Caco-2 (cell line): ENCODE measurements at regions of chr10 and their contacts with region 1.

Region 1: DNA sequence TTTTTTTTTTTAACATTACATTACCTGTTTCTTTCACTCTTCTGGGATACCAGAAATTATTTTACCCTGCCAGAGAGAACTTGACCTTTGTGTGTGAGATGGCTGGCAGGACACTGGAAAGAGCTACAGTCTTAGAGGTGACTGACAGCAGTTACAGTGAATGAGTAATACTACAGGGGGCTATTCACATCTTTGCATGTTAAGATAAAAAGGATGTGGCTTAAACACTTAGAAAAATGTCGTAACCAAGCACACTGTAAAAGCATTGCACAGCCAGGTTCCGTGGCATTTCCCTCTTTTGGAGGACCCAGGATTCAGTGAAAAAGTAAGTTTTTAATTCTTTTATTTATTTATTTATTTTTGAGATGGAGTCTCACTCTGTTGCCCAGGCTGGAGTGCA is 18.8 kb upstream of the TBC1D12 start:
- DNase-seq: no peak
- H3K4me3 ChIP-seq: no peak overlapping the region
- H3K4me3 Mint-ChIP-seq: peak overlapping the region; percentile 29
- H3K27ac Mint-ChIP-seq: peak overlapping the region; percentile 88
- H3K4me1 ChIP-seq: peaks cover 61% of the 10 kb centered on the region
- H3K4me1 Mint-ChIP-seq: peaks cover 62% of the 10 kb centered on the region
- H3K27me3 ChIP-seq: no peaks in the 10 kb centered on the region
- H3K27me3 Mint-ChIP-seq: no peaks in the 10 kb centered on the region
- CTCF ChIP-seq: no peak

Region 2: GRCh38 chr10:94308866-94309265 is 74.7 kb before region 1 on chr10:
- CTCF ChIA-PET with region 1: no interaction called
- POLR2A ChIA-PET with region 1: no interaction called
- intact Hi-C with region 1: no loop called
- DNase-seq: no peak
- H3K4me3 ChIP-seq: no peak overlapping the region
- H3K4me3 Mint-ChIP-seq: no peak overlapping the region
- H3K27ac Mint-ChIP-seq: no peak overlapping the region
- H3K4me1 ChIP-seq: peaks cover 16% of the 10 kb centered on the region; the same call in 1 of the 2 replicates
- H3K4me1 Mint-ChIP-seq: peaks cover 7% of the 10 kb centered on the region
- H3K27me3 ChIP-seq: no peaks in the 10 kb centered on the region
- H3K27me3 Mint-ChIP-seq: no peaks in the 10 kb centered on the region
- CTCF ChIP-seq: no peak

Region 3: DNA sequence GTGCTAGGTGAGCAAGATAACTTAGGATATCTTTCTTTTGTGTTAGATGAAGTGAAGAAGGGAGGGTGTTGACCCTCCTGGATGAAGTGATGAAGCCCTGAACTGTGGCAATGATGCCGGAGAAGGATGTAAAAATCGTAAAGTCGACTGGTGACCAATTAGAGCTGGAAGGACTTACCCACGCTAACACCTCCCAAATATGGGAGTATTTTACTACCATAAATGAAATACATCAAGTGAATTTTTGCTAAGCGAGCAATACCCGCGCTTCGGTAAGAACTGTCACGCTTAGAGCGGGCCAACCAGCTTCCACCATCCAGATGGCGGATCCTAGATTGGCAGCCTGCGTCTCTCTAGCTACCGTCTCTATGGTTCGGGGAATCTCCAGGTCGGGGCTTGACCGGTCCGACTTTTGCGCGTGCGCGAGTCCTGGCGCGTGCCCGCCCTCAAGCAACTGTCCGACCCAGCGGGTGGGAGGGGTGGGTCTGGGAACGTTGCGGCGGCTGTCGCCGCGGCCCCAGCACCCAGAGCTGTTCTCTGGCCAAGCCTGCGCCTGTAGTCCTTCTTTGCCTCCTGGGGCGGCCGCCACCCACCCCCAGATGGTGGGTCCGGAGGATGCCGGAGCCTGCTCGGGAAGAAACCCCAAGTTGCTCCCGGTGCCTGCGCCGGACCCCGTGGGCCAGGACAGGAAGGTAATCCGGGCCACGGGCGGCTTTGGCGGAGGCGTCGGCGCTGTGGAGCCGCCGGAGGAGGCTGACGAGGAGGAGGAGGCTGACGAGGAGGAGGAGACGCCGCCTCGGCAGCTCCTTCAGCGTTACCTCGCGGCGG is 18.7 kb after region 1 on chr10 and contains the start of gene TBC1D12:
- CTCF ChIA-PET with region 1: interaction called, 17 read pairs
- POLR2A ChIA-PET with region 1: interaction called, 10 read pairs
- intact Hi-C with region 1: loop called (anchors 1 kb)
- DNase-seq: peak; percentile 98
- H3K4me3 ChIP-seq: peak within 1 kb of the TSS; percentile 97
- H3K4me3 Mint-ChIP-seq: peak within 1 kb of the TSS; percentile 78
- H3K27ac Mint-ChIP-seq: peak within 1 kb of the TSS; percentile 92
- H3K4me1 ChIP-seq: peaks cover 45% of the 10 kb centered on the region
- H3K4me1 Mint-ChIP-seq: peaks cover 38% of the 10 kb centered on the region
- H3K27me3 ChIP-seq: no peaks in the 10 kb centered on the region
- H3K27me3 Mint-ChIP-seq: no peaks in the 10 kb centered on the region
- CTCF ChIP-seq: no peak
- total RNA-seq, gene TBC1D12: 32.1 and 33.8 TPM in 2 replicates

Region 4: GRCh38 chr10:96097865-96098264 is 1714.3 kb after region 1 on chr10:
- CTCF ChIA-PET with region 1: no interaction called
- POLR2A ChIA-PET with region 1: interaction called, 14 read pairs
- intact Hi-C with region 1: no loop called
- DNase-seq: no peak
- H3K4me3 ChIP-seq: no peak overlapping the region
- H3K4me3 Mint-ChIP-seq: no peak overlapping the region
- H3K27ac Mint-ChIP-seq: no peak overlapping the region
- H3K4me1 ChIP-seq: peaks cover 14% of the 10 kb centered on the region
- H3K4me1 Mint-ChIP-seq: no peaks in the 10 kb centered on the region
- H3K27me3 ChIP-seq: peaks cover 2% of the 10 kb centered on the region; the same call in 1 of the 2 replicates
- H3K27me3 Mint-ChIP-seq: peaks cover 29% of the 10 kb centered on the region
- CTCF ChIP-seq: no peak